ENCODE measurements at regions of chr13 and their contacts with region 1.

Region 1: GRCh38 chr13:95660981-95661581 is 15.9 kb upstream of the DNAJC3 start:
- DNase-seq: peak; percentile 64
- ATAC-seq: no peak
- H3K4me3 ChIP-seq: no peak overlapping the region
- H3K27ac ChIP-seq: no peak overlapping the region
- H3K4me1 ChIP-seq: no peaks in the 10 kb centered on the region
- H3K27me3 ChIP-seq: no peaks in the 10 kb centered on the region
- CTCF ChIP-seq: peak; percentile 61

Region 2: GRCh38 chr13:95494082-95494681 is 166.9 kb before region 1 on chr13:
- CTCF ChIA-PET with region 1: interaction called, 4 read pairs
- POLR2A ChIA-PET with region 1: no interaction called
- intact Hi-C with region 1: loop called (anchors 1 kb)
- DNase-seq: peak; percentile 83
- ATAC-seq: peak; percentile 72
- H3K4me3 ChIP-seq: no peak overlapping the region
- H3K27ac ChIP-seq: no peak overlapping the region
- H3K4me1 ChIP-seq: no peaks in the 10 kb centered on the region
- H3K27me3 ChIP-seq: no peaks in the 10 kb centered on the region
- CTCF ChIP-seq: peak; percentile 77

Region 3: GRCh38 chr13:95536632-95537241 is 124.3 kb before region 1 on chr13:
- CTCF ChIA-PET with region 1: no interaction called
- POLR2A ChIA-PET with region 1: no interaction called
- intact Hi-C with region 1: loop called (anchors 1 kb)
- DNase-seq: peak; percentile 67
- ATAC-seq: no peak
- H3K4me3 ChIP-seq: no peak overlapping the region
- H3K27ac ChIP-seq: no peak overlapping the region
- H3K4me1 ChIP-seq: peaks cover 37% of the 10 kb centered on the region
- H3K27me3 ChIP-seq: no peaks in the 10 kb centered on the region
- CTCF ChIP-seq: peak; percentile 63

Region 4: DNA sequence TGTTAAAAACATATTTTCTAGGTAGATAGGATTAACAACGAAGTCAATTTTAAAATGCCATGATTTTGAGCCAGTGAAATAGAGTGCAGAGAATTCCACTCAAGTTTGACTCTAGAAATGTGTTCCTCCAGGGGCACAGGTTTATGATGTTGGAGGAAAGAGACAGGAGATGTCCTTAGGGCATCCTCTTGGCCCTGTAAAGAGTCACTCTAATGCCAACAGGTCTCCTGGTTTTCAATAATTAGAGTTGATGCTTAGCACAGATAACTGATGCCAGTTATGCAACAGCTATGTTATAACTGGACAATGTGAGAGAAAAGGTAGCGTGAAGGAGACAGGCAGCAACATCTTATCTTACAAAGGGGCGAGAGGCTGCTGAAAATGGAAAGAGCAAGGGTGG is 78.4 kb before region 1 on chr13:
- CTCF ChIA-PET with region 1: interaction called, 10 read pairs
- POLR2A ChIA-PET with region 1: no interaction called
- intact Hi-C with region 1: no loop called
- DNase-seq: no peak
- ATAC-seq: no peak
- H3K4me3 ChIP-seq: no peak overlapping the region
- H3K27ac ChIP-seq: no peak overlapping the region
- H3K4me1 ChIP-seq: no peaks in the 10 kb centered on the region
- H3K27me3 ChIP-seq: no peaks in the 10 kb centered on the region
- CTCF ChIP-seq: no peak

Region 5: DNA sequence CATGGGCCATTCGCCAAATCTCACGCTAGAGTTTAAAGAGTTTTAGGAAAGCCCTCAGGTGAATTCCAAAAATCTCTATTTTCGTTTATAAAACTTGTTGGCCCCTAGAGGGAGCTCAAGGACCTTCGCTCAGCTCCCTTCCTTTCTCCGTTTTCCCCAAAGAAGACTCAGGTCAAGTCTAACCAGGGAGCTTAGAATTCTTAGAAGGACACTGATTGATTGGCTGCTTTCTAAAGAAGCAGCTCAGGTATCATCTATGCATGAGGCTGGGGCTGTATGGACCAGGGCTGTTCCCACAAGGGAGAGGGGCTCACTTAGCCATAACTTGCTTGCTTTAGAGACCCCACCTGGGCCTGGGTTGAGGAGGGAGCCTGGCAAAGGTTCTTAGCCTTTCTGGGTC is 37.1 kb before region 1 on chr13:
- CTCF ChIA-PET with region 1: interaction called, 22 read pairs
- POLR2A ChIA-PET with region 1: no interaction called
- intact Hi-C with region 1: loop called (anchors 1 kb)
- DNase-seq: peak; percentile 58
- ATAC-seq: peak; percentile 70
- H3K4me3 ChIP-seq: no peak overlapping the region
- H3K27ac ChIP-seq: no peak overlapping the region
- H3K4me1 ChIP-seq: no peaks in the 10 kb centered on the region
- H3K27me3 ChIP-seq: no peaks in the 10 kb centered on the region
- CTCF ChIP-seq: peak; percentile 59

Region 6: GRCh38 chr13:96860882-96861281 is 1199.8 kb after region 1 on chr13:
- CTCF ChIA-PET with region 1: interaction called, 12 read pairs
- POLR2A ChIA-PET with region 1: no interaction called
- intact Hi-C with region 1: no loop called
- DNase-seq: no peak
- ATAC-seq: no peak
- H3K4me3 ChIP-seq: no peak overlapping the region
- H3K27ac ChIP-seq: no peak overlapping the region
- H3K4me1 ChIP-seq: no peaks in the 10 kb centered on the region
- H3K27me3 ChIP-seq: peaks cover 19% of the 10 kb centered on the region
- CTCF ChIP-seq: no peak

Measured in PC-3 (cell line).